CD8-positive, alpha-beta T cell (primary cell): ENCODE measurements at regions of chr12 and their contacts with region 1.

Region 1: GRCh38 chr12:54294152-54294952 is 6.5 kb downstream of the NFE2 start:
- DNase-seq: peak in 8 of 9 experiments; percentile 38 to 72 (median 56)
- ATAC-seq: peak; percentile 77
- H3K4me3 ChIP-seq: no peak overlapping the region
- H3K4me3 Mint-ChIP-seq: no peak overlapping the region
- H3K27ac ChIP-seq: no peak overlapping the region
- H3K27ac Mint-ChIP-seq: no peak overlapping the region
- H3K4me1 ChIP-seq: peaks cover 3% of the 10 kb centered on the region
- H3K4me1 Mint-ChIP-seq: peaks cover 7% of the 10 kb centered on the region
- H3K27me3 ChIP-seq: peaks cover 0 to 2% of the 10 kb centered on the region in 2 experiments
- H3K27me3 Mint-ChIP-seq: peaks cover 13% of the 10 kb centered on the region
- CTCF ChIP-seq: peak; percentile 53

Region 2: GRCh38 chr12:53952871-53953734 is 341.2 kb before region 1 on chr12:
- CTCF ChIA-PET with region 1: no interaction called
- POLR2A ChIA-PET with region 1: no interaction called
- intact Hi-C with region 1: no loop called
- DNase-seq: no peak
- ATAC-seq: no peak
- H3K4me3 ChIP-seq: no peak overlapping the region
- H3K4me3 Mint-ChIP-seq: no peak overlapping the region
- H3K27ac ChIP-seq: no peak overlapping the region
- H3K27ac Mint-ChIP-seq: no peak overlapping the region
- H3K4me1 ChIP-seq: peaks cover 39% of the 10 kb centered on the region
- H3K4me1 Mint-ChIP-seq: peaks cover 33% of the 10 kb centered on the region
- H3K27me3 ChIP-seq: peaks cover 89 to 94% of the 10 kb centered on the region in 2 experiments
- H3K27me3 Mint-ChIP-seq: peaks cover 82% of the 10 kb centered on the region
- CTCF ChIP-seq: no peak

Region 3: GRCh38 chr12:54251667-54252284 is 42.6 kb before region 1 on chr12:
- CTCF ChIA-PET with region 1: interaction called, 13 read pairs
- POLR2A ChIA-PET with region 1: no interaction called
- intact Hi-C with region 1: no loop called
- DNase-seq: peak in 3 of 9 experiments; percentile 11 to 71 (median 60)
- ATAC-seq: peak; percentile 79
- H3K4me3 ChIP-seq: no peak overlapping the region
- H3K4me3 Mint-ChIP-seq: no peak overlapping the region
- H3K27ac ChIP-seq: no peak overlapping the region
- H3K27ac Mint-ChIP-seq: no peak overlapping the region
- H3K4me1 ChIP-seq: no peaks in the 10 kb centered on the region
- H3K4me1 Mint-ChIP-seq: peaks cover 11% of the 10 kb centered on the region
- H3K27me3 ChIP-seq: no peaks in the 10 kb centered on the region
- H3K27me3 Mint-ChIP-seq: no peaks in the 10 kb centered on the region
- CTCF ChIP-seq: peak; percentile 87

Region 4: GRCh38 chr12:54279866-54280467 is 14.4 kb before region 1 on chr12 and contains the start of gene CBX5:
- CTCF ChIA-PET with region 1: interaction called, 9 read pairs
- POLR2A ChIA-PET with region 1: interaction called, 21 read pairs
- intact Hi-C with region 1: no loop called
- DNase-seq: peak; percentile 99 to 100 (median 100)
- ATAC-seq: peak; percentile 47
- H3K4me3 ChIP-seq: peak within 1 kb of the TSS; percentile 83 to 93
- H3K4me3 Mint-ChIP-seq: no peak within 1 kb of the TSS
- H3K27ac ChIP-seq: peak within 1 kb of the TSS; percentile 92 to 100
- H3K27ac Mint-ChIP-seq: no peak within 1 kb of the TSS
- H3K4me1 ChIP-seq: peaks cover 52% of the 10 kb centered on the region
- H3K4me1 Mint-ChIP-seq: peaks cover 14% of the 10 kb centered on the region
- H3K27me3 ChIP-seq: no peaks in the 10 kb centered on the region
- H3K27me3 Mint-ChIP-seq: no peaks in the 10 kb centered on the region
- CTCF ChIP-seq: no peak
- total RNA-seq, gene CBX5: 26.1 to 26.7 TPM

Region 5: GRCh38 chr12:54306925-54307741 is 12.8 kb after region 1 on chr12:
- CTCF ChIA-PET with region 1: interaction called, 18 read pairs
- POLR2A ChIA-PET with region 1: interaction called, 3 read pairs
- intact Hi-C with region 1: no loop called
- DNase-seq: peak in 3 of 9 experiments; percentile 19 to 54 (median 34)
- ATAC-seq: no peak
- H3K4me3 ChIP-seq: no peak overlapping the region
- H3K4me3 Mint-ChIP-seq: no peak overlapping the region
- H3K27ac ChIP-seq: no peak overlapping the region
- H3K27ac Mint-ChIP-seq: no peak overlapping the region
- H3K4me1 ChIP-seq: peaks cover 9% of the 10 kb centered on the region
- H3K4me1 Mint-ChIP-seq: peaks cover 21% of the 10 kb centered on the region
- H3K27me3 ChIP-seq: no peaks in the 10 kb centered on the region
- H3K27me3 Mint-ChIP-seq: peaks cover 27% of the 10 kb centered on the region
- CTCF ChIP-seq: no peak

Region 6: GRCh38 chr12:54337280-54337842 is 43.0 kb after region 1 on chr12:
- CTCF ChIA-PET with region 1: interaction called, 50 read pairs
- POLR2A ChIA-PET with region 1: interaction called, 3 read pairs
- intact Hi-C with region 1: no loop called
- DNase-seq: no peak
- ATAC-seq: no peak
- H3K4me3 ChIP-seq: no peak overlapping the region
- H3K4me3 Mint-ChIP-seq: no peak overlapping the region
- H3K27ac ChIP-seq: no peak overlapping the region
- H3K27ac Mint-ChIP-seq: no peak overlapping the region
- H3K4me1 ChIP-seq: no peaks in the 10 kb centered on the region
- H3K4me1 Mint-ChIP-seq: peaks cover 25% of the 10 kb centered on the region
- H3K27me3 ChIP-seq: no peaks in the 10 kb centered on the region
- H3K27me3 Mint-ChIP-seq: no peaks in the 10 kb centered on the region
- CTCF ChIP-seq: no peak

Region 7: DNA sequence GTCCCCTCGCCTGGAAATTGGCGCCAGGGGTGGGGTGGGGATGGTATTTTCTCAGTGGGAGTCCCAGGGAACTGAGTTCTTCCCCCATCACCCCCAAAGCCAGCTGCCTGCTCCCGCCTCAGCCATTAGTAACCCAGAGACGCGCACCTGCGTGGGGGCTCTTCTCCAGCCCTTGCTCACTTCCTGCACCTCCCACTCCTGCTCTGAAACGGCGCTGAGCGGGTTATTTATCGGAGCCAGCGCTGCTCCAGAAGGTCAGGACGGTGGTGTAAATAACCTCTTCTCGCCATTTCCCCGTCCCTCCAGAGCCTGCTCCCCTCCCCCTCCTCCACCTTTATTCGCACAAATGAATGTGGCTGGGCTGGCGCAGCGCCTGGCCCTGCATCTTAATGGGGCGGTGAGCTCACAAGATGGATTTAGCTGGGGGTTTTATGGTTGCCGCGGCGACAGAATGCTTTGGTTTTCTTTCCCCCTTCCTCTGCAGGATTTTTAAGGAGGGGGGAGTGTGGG is 57.7 kb after region 1 on chr12:
- CTCF ChIA-PET with region 1: interaction called, 37 read pairs
- POLR2A ChIA-PET with region 1: no interaction called
- intact Hi-C with region 1: no loop called
- DNase-seq: peak in 6 of 9 experiments; percentile 21 to 57 (median 32)
- ATAC-seq: peak; percentile 75
- H3K4me3 ChIP-seq: peak overlapping the region; percentile 26 to 50
- H3K4me3 Mint-ChIP-seq: peak overlapping the region; percentile 85
- H3K27ac ChIP-seq: no peak overlapping the region
- H3K27ac Mint-ChIP-seq: peak overlapping the region; percentile 76
- H3K4me1 ChIP-seq: peaks cover 15% of the 10 kb centered on the region
- H3K4me1 Mint-ChIP-seq: peaks cover 12% of the 10 kb centered on the region
- H3K27me3 ChIP-seq: no peaks in the 10 kb centered on the region
- H3K27me3 Mint-ChIP-seq: no peaks in the 10 kb centered on the region
- CTCF ChIP-seq: no peak

Region 8: DNA sequence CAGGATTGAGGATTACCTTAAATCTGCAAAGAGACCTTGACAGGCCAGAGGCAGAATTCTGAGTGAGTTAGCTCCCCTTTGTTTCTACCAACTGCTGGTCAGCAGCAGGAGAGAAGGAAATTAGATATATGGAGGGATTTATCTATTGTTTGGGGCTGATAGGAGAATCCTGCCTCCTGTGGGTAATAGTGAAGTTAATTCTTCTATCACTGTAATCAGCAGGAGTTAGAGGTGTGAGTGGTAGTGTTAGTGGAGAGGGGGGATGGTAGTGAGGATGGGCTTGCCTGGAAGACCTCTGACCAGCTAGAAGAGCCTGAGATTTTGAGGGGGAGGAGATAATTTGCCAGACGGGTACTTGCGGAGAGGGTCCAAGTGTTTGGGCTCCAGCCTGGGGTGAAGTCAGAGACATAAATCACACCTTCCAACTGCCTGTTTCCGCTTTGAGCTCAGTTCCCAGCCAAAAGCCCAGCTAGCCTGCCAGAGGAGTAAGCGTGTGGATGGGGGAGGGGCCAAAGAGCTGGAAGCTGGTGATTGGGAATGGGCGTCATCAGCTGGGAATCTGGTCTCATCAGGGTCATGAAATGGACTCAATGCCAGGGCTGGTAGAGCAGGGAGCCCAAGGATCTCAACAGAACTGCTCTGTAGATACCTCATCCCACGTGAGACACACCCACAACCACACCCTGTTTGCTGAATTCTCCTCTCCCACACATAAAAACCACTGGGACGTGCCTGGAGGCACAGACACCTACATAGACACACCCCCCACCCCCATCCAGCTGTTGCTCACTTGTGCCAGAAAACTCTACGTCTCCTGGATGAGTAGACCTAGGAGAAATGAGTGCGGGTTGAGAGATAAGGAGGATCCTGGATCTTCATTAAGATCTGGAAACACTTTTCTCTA is 137.8 kb after region 1 on chr12:
- CTCF ChIA-PET with region 1: no interaction called
- POLR2A ChIA-PET with region 1: no interaction called
- intact Hi-C with region 1: no loop called
- DNase-seq: peak in 1 of 9 experiments; percentile 21
- ATAC-seq: no peak
- H3K4me3 ChIP-seq: no peak overlapping the region
- H3K4me3 Mint-ChIP-seq: no peak overlapping the region
- H3K27ac ChIP-seq: no peak overlapping the region
- H3K27ac Mint-ChIP-seq: no peak overlapping the region
- H3K4me1 ChIP-seq: peaks cover 14% of the 10 kb centered on the region
- H3K4me1 Mint-ChIP-seq: peaks cover 44% of the 10 kb centered on the region
- H3K27me3 ChIP-seq: no peaks in the 10 kb centered on the region
- H3K27me3 Mint-ChIP-seq: no peaks in the 10 kb centered on the region
- CTCF ChIP-seq: no peak